Activated naive CD4-positive, alpha-beta T cell treated with anti-CD3 and anti-CD28 coated beads, Interleukin-2, amount 10 ng/mL, durations not matched to agents 7 days and 5 days (primary cell): ENCODE measurements at regions of chr11 and their contacts with region 1.

Region 1: GRCh38 chr11:124950601-124951330 is 3.2 kb upstream of the CCDC15 start:
- DNase-seq: peak; percentile 59
- H3K4me3 Mint-ChIP-seq: no peak overlapping the region
- H3K27ac Mint-ChIP-seq: no peak overlapping the region
- H3K4me1 Mint-ChIP-seq: peaks cover 16% of the 10 kb centered on the region
- H3K27me3 Mint-ChIP-seq: no peaks in the 10 kb centered on the region

Region 2: DNA sequence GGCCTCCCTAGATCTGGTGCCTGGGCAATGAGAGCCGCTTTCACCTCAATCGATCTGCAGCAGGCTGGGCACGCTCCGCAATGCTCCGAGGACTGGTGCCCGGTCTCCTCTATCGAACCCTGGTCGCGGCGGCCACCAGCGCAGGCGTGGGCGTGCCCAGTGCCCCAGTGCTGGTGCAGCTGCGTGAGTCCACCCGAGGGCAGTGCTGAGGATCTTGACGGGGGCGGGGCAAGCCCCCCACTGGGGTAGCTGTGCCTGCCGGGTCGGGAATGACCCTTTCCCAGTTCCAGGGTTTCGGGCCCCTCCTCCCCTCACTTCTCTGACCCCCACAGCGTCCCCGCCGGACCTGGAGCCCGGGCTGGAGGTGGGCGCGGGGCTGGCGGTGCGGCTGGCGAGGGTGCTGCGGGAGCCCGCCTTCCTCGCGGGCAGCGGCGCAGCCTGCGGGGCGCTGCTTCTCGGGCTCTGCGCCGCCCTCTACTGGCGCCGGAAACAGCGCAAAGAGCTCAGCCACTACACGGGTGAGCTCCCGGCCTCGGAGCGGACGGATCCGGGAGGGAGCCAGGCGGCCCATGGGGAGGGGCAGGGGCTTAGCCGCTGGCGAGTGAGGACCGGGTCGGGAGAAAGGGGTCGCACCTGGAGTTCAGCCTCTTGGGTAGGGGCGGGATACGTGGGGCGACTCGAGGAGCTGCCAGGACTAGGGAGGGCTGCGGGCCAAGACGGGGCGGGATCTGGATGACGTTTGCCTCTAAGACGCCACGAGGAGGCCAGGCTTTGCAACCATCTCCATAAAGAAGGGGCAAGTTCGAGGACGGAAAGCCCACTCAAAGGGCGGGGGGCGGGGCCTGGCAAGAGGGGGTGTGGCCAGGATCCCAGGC is 74.6 kb before region 1 on chr11:
- CTCF ChIA-PET with region 1: interaction called, 10 read pairs
- DNase-seq: peak; percentile 86
- H3K4me3 Mint-ChIP-seq: peak overlapping the region; percentile 79
- H3K27ac Mint-ChIP-seq: peak overlapping the region; percentile 85
- H3K4me1 Mint-ChIP-seq: peaks cover 29% of the 10 kb centered on the region
- H3K27me3 Mint-ChIP-seq: peaks cover 77% of the 10 kb centered on the region

Region 3: GRCh38 chr11:124934862-124935547 is 15.8 kb before region 1 on chr11:
- CTCF ChIA-PET with region 1: interaction called, 10 read pairs
- DNase-seq: no peak
- H3K4me3 Mint-ChIP-seq: no peak overlapping the region
- H3K27ac Mint-ChIP-seq: no peak overlapping the region
- H3K4me1 Mint-ChIP-seq: peaks cover 16% of the 10 kb centered on the region
- H3K27me3 Mint-ChIP-seq: peaks cover 37% of the 10 kb centered on the region